Left cardiac atrium (tissue), 4 donors: ENCODE measurements at regions of chr22 and their contacts with region 1.

Region 1: DNA sequence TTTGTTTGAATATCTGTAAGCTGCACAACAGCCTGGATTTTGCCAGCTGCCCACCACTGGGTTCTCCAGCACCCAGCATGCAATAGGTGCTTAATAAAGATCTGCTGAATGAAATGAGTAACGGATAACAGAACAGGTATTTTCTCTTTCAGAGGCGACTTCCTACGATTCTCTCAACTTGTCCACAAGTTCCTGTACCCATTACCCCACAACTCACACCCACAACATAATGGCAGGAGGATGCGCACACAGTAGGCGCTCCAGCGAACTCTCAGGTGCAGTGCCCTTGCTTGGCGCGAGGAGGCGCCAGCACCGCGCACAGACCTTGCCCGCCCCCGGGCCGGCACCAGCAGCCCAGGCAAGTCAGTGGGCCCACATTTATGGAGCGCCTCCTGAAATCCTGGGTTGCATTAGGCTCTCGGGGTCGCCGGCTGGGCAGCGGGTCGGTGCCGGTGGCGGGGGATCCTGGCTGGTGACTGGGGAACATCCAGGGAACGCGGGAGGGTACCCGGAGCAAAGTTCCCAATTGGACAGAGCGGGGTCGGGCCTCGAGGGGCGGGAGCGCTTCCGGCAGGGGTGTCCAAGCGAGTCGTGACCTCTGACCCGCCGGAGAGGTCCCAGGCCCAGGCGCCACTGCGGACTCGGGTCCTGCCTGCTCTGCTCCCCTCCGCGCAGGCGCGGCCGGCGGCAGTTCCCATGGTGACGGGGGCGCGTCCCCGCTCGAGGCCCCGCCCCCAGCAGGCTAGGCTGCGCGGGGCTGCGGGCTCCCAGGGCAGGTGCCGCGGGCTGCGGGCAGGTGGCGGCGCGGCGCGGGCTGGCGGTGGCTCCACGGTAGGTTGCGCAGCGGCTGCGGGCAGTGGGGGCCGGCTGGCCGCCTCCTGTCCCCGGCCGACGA is at the start of gene KIAA1671:
- DNase-seq: peak; percentile 90
- ATAC-seq: peak; percentile 96 to 97
- total RNA-seq, gene KIAA1671: 18.2 to 20.7 TPM

Region 2: GRCh38 chr22:24938741-24939341 is 13.3 kb before region 1 on chr22:
- intact Hi-C with region 1: no loop called
- DNase-seq: no peak
- ATAC-seq: peak; percentile 30 to 56

Region 3: DNA sequence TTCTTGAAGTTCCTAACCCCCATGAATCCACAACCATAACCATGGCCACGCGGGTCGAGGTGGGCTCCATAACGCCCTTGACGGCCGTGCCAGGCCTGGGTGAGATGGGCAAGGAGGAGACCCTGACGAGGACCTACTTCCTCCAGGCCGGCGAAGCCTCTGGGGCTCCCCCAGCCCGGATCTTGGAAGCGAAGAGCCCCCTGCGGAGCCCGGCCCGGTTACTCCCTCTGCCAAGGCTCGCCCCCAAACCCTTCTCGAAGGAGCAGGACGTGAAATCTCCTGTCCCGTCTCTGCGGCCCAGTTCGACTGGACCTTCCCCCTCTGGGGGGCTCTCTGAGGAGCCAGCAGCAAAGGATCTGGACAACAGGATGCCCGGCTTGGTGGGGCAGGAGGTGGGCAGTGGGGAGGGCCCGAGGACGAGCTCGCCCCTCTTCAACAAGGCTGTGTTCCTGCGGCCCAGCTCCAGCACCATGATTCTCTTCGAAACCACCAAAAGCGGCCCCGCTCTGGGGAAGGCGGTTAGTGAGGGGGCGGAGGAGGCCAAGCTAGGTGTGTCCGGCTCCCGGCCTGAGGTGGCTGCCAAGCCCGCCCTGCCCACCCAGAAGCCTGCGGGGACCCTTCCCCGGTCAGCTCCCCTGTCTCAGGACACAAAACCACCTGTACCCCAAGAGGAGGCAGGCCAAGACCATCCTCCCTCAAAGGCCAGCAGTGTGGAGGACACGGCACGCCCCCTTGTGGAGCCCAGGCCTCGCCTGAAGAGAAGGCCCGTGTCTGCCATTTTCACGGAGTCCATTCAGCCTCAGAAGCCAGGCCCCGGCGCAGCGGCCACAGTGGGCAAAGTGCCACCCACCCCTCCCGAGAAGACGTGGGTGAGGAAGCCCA is 76.0 kb after region 1 on chr22:
- intact Hi-C with region 1: loop called (anchors 5 kb)
- DNase-seq: peak; percentile 64
- ATAC-seq: peak; percentile 29 to 42

Region 4: DNA sequence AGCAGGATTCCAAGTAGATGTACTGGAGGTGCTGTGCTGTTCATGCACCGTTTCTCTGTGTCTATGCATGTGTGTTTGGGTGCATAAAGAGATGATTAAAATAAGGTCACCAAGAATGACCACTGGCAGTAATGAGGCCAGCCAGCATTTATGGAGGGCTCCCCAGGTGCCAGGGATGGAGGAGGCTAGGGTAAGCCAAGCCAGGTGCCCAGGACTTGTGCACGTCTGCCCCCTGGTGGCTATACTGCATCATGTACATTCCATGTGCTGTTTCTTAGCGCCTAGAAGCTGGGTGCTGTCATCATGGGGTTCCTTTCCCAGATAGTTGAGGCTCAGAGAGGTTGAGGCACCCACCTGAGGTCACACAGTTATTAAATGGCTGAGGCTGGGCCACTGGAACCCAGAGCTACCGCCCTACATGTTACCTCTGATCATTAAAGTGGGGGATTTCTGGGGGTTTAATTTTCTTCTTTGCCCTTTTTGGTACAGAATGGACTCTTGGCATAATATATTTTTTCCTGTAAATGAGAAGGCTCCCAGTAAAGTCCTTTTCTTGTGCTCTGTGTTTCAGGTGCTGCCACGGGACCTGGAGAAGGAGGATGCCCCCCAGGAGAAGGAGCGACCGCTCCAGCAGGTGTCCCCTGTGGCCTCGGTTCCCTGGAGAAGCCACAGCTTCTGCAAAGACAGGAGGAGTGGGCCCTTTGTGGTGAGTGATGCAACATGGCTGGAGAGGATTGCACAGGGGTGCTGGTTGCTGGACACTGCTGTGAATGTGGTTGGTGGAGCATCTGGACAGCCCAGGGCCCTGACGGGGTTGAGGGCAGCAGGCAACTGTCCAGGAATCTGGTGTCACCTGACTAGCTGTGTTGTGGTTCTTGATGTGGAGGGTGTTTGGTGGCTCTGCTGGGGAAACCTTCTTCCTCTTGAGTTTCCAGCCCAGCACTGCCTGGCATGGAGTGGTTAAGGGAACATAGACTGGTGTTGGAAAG is 96.8 kb after region 1 on chr22:
- intact Hi-C with region 1: loop called (anchors 1 to 5 kb)
- DNase-seq: peak; percentile 71
- ATAC-seq: peak; percentile 72 to 77